ENCODE measurements at regions of chr20 and their contacts with region 1.

Region 1: DNA sequence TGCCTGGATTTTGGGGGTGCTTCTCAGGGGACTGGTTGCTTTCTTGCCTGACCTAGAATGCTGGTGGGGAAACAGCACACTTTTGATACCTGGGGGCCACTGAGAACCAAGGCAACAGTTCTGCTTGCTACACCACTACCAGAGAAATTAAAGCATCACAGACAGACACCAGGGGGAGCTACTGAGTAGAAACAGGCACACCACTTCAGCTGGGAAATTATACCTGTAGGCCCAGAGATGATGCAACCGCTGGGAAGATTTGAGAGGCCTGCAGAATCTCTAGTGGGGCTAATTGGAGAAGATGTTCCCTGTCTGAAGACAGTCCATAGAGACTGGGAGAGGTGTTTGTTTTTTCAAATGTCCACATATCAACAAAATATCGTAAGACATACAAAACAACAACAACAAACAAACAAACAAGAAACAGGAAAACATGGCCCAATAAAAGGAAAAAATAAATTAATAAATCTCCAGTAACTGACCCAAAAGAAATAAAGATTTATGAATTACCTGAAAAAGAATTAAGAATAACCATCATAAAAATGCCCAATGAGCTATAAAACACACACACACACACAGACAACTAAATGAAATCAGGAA is 129.4 kb upstream of the RIN2 start:
- DNase-seq: peak; percentile 75
- ATAC-seq: peak; percentile 89
- H3K4me3 Mint-ChIP-seq: no peak overlapping the region
- H3K27ac Mint-ChIP-seq: peak overlapping the region; percentile 69
- H3K4me1 Mint-ChIP-seq: peaks cover 4% of the 10 kb centered on the region
- H3K27me3 Mint-ChIP-seq: no peaks in the 10 kb centered on the region
- CTCF ChIP-seq: peak; percentile 80

Region 2: DNA sequence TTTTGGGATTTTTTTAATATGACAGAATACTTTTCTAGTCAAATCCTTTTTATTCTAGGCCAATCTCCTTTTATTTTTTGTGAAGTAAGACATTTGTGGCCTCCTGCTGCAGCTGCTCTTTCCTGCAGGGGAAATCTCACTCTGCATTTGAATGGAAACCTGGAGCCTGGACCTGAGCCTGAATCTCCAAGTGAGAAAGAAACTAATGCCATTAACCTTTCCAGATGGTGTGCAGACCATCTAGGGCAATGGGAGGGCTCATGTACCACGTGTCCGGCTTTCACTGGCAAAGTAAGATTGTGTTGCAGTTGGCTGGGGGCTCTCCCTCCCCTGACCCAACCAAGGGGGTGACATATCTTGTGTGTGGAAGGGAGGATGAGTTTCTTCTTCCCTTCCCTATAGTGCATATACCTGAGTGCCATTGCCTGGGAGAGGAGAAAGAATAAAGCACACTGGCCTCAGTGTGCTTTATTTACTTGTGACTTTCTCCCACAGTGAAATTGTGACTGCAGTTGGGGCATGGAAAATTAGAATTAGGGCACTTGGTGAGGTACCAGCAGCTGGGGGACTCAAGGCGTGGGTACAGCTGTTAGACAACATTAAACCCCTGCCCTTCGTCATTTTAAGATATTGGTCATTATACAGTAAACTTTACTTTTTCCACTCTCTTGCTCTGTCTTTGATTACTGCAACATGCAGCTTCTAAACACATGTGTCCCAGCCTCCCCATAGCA is 30.4 kb before region 1 on chr20:
- CTCF ChIA-PET with region 1: interaction called, 4 read pairs
- POLR2A ChIA-PET with region 1: interaction called, 16 read pairs
- DNase-seq: peak; percentile 14
- ATAC-seq: peak; percentile 62
- H3K4me3 Mint-ChIP-seq: no peak overlapping the region
- H3K27ac Mint-ChIP-seq: peak overlapping the region; percentile 71; the same call in 1 of the 2 replicates
- H3K4me1 Mint-ChIP-seq: peaks cover 20% of the 10 kb centered on the region
- H3K27me3 Mint-ChIP-seq: no peaks in the 10 kb centered on the region
- CTCF ChIP-seq: no peak

Region 3: GRCh38 chr20:19644085-19644484 is 15.4 kb after region 1 on chr20:
- CTCF ChIA-PET with region 1: interaction called, 14 read pairs
- POLR2A ChIA-PET with region 1: interaction called, 3 read pairs
- DNase-seq: no peak
- ATAC-seq: no peak
- H3K4me3 Mint-ChIP-seq: no peak overlapping the region
- H3K27ac Mint-ChIP-seq: no peak overlapping the region
- H3K4me1 Mint-ChIP-seq: no peaks in the 10 kb centered on the region
- H3K27me3 Mint-ChIP-seq: no peaks in the 10 kb centered on the region
- CTCF ChIP-seq: no peak

Region 4: GRCh38 chr20:19661717-19662636 is 33.3 kb after region 1 on chr20:
- CTCF ChIA-PET with region 1: interaction called, 13 read pairs
- POLR2A ChIA-PET with region 1: no interaction called
- DNase-seq: peak; percentile 68
- ATAC-seq: peak; percentile 80
- H3K4me3 Mint-ChIP-seq: no peak overlapping the region
- H3K27ac Mint-ChIP-seq: no peak overlapping the region
- H3K4me1 Mint-ChIP-seq: peaks cover 20% of the 10 kb centered on the region
- H3K27me3 Mint-ChIP-seq: no peaks in the 10 kb centered on the region
- CTCF ChIP-seq: peak; percentile 95

Measured in WTC11 (cell line).